PC-9 (cell line): ENCODE measurements at regions of chr3 and their contacts with region 1.

Region 1: DNA sequence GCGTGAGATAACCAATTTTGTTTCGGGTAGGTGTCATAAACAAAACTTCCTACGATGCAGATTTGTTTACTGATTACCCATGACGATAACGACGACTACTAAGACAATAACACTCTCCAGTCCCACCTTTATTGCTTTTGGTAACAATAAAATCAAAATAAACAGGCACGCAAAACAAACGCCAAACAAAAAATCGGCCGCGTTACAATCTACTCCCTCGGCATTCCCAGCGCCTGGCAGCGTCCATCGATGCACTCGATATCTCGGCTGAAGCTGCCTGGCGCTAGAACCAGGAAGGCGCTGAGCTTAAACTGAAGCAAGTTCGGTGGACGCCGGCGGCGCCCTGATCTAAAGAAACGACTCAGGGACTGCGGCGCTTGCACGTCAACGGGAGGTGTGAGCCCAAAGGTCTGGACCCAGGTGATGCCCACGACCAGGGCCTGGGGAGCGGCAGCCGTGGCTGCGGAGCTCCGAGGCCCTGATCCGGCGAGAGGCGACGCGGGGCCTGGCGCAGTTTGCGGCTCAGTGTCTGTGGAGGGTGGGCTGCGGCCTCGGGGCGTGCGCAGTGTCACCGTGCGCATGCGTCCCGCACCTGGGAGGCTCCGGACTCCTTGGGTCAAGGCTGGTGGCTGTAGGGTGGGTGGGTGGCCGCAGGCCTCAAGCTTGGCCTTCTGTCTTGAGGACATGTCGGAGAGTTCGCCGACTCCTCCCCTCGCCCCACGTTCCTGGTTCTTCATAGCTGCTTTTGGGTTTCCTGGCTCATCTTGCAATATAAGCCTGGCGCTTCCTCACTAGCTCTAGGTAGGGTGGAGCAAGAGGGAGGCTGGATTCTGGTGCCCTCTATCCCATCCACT is at the start of gene RSRC1:
- DNase-seq: peak; percentile 87 to 88
- H3K4me3 ChIP-seq: peak within 1 kb of the TSS; percentile 84
- H3K27ac ChIP-seq: peak within 1 kb of the TSS; percentile 83
- H3K4me1 ChIP-seq: peaks cover 28% of the 10 kb centered on the region
- H3K27me3 ChIP-seq: no peaks in the 10 kb centered on the region
- CTCF ChIP-seq: 0 out of 2 replicates have a peak, but pooled peaks have one; percentile 9
- total RNA-seq, gene RSRC1: 43.1 and 60.3 TPM in 2 replicates

Region 2: DNA sequence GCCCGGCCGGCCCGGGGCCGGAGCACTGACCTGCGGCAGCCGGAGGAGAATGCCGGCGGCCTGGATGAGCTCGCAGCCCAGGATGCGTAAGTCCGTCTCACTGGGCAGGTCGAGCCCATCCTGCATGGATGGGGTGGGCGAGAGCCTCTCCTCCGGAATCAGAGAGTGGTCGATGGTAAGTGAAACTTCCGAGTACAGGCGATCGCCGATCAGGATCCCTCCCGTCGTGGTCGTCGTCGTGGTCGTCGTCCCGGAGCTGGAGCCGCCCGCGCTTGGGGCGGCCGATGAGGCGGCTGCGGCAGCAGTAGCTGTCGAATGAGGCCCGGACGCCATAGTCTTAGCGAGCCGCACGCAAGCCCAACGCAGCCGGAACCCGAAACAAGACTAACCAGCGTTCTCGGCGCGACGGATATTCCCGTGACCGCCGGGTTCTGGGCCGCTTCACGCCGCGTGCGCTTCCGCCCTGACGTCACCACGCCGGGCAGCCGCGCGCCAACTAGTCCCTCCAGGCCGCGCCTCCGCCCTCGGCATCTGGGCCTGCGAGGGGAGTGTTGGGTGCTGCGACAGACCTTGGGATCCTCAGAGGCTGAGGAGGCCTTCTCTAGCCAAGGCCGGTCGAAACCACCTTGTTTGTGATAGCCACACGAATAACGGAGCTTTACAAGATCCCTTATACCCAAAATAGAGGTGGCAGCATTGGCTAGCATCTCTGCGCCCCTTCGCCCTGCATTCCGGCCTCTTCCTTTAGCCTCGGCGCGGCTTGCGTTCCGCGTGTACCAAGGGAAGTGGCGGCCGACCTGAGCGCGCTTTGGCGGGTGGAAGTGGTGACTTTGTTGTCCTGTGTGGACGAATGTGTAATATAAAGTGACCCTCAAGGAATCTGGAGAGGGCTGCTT is 950.0 kb before region 1 on chr3 and contains the start of gene CCNL1:
- CTCF ChIA-PET with region 1: no interaction called
- POLR2A ChIA-PET with region 1: interaction called, 10 read pairs
- intact Hi-C with region 1: no loop called
- DNase-seq: peak; percentile 92 to 97
- H3K4me3 ChIP-seq: peak within 1 kb of the TSS; percentile 93
- H3K27ac ChIP-seq: peak within 1 kb of the TSS; percentile 100
- H3K4me1 ChIP-seq: peaks cover 50% of the 10 kb centered on the region
- H3K27me3 ChIP-seq: no peaks in the 10 kb centered on the region
- CTCF ChIP-seq: no peak
- total RNA-seq, gene CCNL1: 91.3 and 101 TPM in 2 replicates

Region 3: DNA sequence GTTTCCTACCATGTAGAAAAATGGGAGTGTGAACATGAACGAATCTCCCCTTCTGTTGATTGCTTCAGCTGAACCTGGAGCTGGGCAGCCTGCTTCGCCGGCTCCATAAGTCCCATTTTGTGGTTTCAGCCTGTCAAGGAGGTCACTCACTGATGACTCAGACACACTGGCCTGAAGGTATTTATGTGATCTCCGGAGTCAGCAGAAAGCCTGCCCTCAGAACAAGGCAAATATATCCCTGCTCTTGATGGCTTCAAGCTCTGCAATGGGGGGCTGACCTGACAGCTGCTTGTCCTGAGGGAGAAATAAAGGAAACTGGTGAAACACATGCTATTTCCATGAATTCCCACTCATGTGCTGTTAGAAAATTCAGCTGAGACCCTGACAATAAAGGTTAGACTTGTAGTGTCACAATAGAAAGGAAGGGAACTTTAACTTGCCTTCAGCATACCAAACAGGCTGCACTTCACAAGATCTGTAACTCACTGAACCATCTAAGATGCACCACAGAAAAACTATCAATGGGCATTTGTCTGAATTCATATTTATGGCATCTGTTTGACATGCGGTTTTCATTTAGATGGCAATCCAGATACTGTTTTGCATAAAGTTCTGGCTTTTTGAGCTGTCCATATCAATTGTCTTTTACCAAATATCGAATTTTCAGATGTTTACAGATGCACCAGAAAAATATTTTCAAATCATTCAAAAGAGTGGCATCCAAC is 324.8 kb before region 1 on chr3:
- CTCF ChIA-PET with region 1: no interaction called
- POLR2A ChIA-PET with region 1: no interaction called
- intact Hi-C with region 1: loop called (anchors 5 kb)
- DNase-seq: peak; percentile 73 to 92
- H3K4me3 ChIP-seq: peak overlapping the region; percentile 7; the same call in 1 of the 2 replicates
- H3K27ac ChIP-seq: peak overlapping the region; percentile 22
- H3K4me1 ChIP-seq: peaks cover 49% of the 10 kb centered on the region
- H3K27me3 ChIP-seq: no peaks in the 10 kb centered on the region
- CTCF ChIP-seq: no peak

Region 4: GRCh38 chr3:158167737-158168471 is 57.9 kb after region 1 on chr3:
- CTCF ChIA-PET with region 1: no interaction called
- POLR2A ChIA-PET with region 1: no interaction called
- intact Hi-C with region 1: loop called (anchors 2 kb)
- DNase-seq: peak; percentile 38 to 92
- H3K4me3 ChIP-seq: no peak overlapping the region
- H3K27ac ChIP-seq: peak overlapping the region; percentile 64
- H3K4me1 ChIP-seq: peaks cover 21% of the 10 kb centered on the region
- H3K27me3 ChIP-seq: no peaks in the 10 kb centered on the region
- CTCF ChIP-seq: no peak

Region 5: GRCh38 chr3:158264894-158265293 is 154.9 kb after region 1 on chr3:
- CTCF ChIA-PET with region 1: no interaction called
- POLR2A ChIA-PET with region 1: interaction called, 28 read pairs
- intact Hi-C with region 1: no loop called
- DNase-seq: no peak
- H3K4me3 ChIP-seq: no peak overlapping the region
- H3K27ac ChIP-seq: no peak overlapping the region
- H3K4me1 ChIP-seq: no peaks in the 10 kb centered on the region
- H3K27me3 ChIP-seq: no peaks in the 10 kb centered on the region
- CTCF ChIP-seq: no peak

Region 6: DNA sequence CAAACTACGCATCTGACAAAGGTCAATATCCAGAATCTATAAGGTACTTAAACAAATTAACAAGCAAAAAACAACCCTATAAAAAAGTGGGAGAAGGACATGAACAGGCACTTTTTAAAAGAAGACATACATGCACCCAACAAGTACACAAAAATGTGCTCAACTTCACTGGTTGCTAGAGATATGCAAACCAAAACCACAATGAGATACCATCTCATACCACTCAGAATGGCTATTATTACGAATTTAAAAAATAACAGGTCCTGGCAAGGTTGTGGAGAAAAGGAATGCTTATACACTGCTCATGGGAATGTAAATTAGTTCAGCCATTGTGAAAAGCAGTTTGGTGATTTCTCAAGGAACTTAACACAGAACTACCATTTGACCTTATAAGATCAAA is 285.4 kb after region 1 on chr3:
- CTCF ChIA-PET with region 1: no interaction called
- POLR2A ChIA-PET with region 1: interaction called, 14 read pairs
- intact Hi-C with region 1: no loop called
- DNase-seq: no peak
- H3K4me3 ChIP-seq: no peak overlapping the region
- H3K27ac ChIP-seq: no peak overlapping the region
- H3K4me1 ChIP-seq: no peaks in the 10 kb centered on the region
- H3K27me3 ChIP-seq: no peaks in the 10 kb centered on the region
- CTCF ChIP-seq: no peak

Region 7: DNA sequence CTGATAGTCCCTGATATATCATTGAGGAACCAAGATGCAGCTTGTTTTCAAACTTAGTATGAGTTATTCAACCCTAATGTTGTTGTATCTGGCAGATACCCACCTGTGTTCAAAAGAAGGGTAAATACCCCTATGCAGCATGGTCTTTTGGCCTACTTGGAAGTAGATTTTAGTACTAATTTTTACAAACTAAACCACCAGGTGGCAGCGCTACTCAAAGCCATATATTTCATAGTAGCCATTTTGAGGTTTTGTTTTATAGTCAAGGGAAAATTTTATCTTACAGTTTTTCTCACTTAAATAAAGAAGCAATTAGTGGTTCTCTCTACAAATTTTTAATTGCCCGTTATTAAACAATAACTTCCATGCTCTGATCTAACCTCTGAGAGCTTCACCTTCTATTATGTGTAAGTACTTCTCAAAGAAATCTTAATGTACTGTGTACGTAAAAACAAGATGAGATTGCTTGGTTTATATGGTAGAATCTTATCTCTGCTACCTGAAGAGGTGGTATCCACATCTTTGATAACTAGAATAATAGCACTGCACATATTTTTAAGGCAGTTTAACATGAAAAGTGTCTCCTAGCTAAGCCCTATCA is 429.5 kb after region 1 on chr3:
- CTCF ChIA-PET with region 1: no interaction called
- POLR2A ChIA-PET with region 1: no interaction called
- intact Hi-C with region 1: loop called (anchors 10 kb)
- DNase-seq: peak in 1 of 2 experiments; percentile 12
- H3K4me3 ChIP-seq: no peak overlapping the region
- H3K27ac ChIP-seq: no peak overlapping the region
- H3K4me1 ChIP-seq: no peaks in the 10 kb centered on the region
- H3K27me3 ChIP-seq: no peaks in the 10 kb centered on the region
- CTCF ChIP-seq: peak; percentile 78